ENCODE measurements at regions of chr15 and their contacts with region 1.

Region 1: GRCh38 chr15:46131876-46132275 is 497.0 kb downstream of the SQOR start:
- DNase-seq: no peak
- H3K4me3 ChIP-seq: no peak overlapping the region
- H3K27ac ChIP-seq: no peak overlapping the region
- H3K4me1 ChIP-seq: no peaks in the 10 kb centered on the region
- H3K27me3 ChIP-seq: no peaks in the 10 kb centered on the region
- CTCF ChIP-seq: no peak

Region 2: GRCh38 chr15:46120713-46121112 is 11.2 kb before region 1 on chr15:
- CTCF ChIA-PET with region 1: no interaction called
- POLR2A ChIA-PET with region 1: no interaction called
- intact Hi-C with region 1: loop called (anchors 1 kb)
- DNase-seq: no peak
- H3K4me3 ChIP-seq: no peak overlapping the region
- H3K27ac ChIP-seq: no peak overlapping the region
- H3K4me1 ChIP-seq: no peaks in the 10 kb centered on the region
- H3K27me3 ChIP-seq: no peaks in the 10 kb centered on the region
- CTCF ChIP-seq: no peak